ENCODE measurements at regions of chr6 and their contacts with region 1.

Region 1: DNA sequence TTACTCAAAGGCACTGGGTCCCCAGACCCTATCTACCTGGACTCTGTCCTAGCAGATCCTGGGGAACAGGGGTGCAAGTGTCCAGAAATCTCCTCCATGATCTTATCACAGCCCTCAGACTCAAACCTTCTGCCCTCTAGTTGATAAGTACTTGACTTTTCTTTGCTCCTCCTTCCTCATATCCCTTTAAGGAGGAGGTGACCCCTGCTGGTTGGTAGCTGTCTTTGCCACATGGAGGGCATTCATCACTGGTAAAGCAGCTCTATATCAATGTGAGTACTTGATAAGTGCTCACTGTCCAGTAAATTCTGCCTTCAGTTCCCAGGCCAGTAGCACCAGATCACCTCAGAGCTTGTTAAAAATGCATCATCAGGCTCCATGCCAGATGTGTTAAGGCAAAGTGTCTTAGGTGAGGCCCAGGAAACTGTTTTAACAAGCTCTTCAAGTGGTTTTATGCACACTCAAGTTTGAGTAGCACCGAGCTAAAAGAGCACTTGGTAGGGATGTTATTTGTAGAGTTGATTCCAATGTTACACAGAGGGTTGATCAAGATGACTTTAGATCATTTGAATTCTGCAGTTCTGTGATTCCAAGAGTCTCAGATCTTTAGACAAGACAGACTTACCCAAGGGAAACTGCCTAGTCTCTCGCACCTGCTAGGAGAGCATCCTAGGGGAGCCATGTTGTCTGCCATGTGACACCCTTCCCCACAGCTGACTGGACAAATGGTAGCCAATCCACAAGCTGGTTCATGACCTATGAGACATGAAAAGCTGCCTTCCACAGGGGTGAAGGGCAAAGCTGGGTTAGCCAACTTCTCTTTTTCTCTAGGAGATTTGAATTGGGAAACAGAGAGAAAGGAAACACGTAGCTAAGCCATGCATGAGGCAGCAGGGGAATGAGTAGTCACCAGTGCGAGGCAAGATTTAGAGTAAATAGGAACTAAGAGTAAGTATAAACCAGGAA is 18.6 kb downstream of the TREML2 start:
- DNase-seq: no peak
- ATAC-seq: peak; percentile 99
- H3K4me3 ChIP-seq: no peak overlapping the region
- H3K27ac ChIP-seq: no peak overlapping the region
- H3K4me1 ChIP-seq: no peaks in the 10 kb centered on the region
- H3K27me3 ChIP-seq: no peaks in the 10 kb centered on the region
- CTCF ChIP-seq: peak; percentile 73 to 77 (median 76)
- EP300 ChIP-seq: no peak
- POLR2A ChIP-seq: no peak
- RAD21 ChIP-seq: peak; percentile 66

Region 2: DNA sequence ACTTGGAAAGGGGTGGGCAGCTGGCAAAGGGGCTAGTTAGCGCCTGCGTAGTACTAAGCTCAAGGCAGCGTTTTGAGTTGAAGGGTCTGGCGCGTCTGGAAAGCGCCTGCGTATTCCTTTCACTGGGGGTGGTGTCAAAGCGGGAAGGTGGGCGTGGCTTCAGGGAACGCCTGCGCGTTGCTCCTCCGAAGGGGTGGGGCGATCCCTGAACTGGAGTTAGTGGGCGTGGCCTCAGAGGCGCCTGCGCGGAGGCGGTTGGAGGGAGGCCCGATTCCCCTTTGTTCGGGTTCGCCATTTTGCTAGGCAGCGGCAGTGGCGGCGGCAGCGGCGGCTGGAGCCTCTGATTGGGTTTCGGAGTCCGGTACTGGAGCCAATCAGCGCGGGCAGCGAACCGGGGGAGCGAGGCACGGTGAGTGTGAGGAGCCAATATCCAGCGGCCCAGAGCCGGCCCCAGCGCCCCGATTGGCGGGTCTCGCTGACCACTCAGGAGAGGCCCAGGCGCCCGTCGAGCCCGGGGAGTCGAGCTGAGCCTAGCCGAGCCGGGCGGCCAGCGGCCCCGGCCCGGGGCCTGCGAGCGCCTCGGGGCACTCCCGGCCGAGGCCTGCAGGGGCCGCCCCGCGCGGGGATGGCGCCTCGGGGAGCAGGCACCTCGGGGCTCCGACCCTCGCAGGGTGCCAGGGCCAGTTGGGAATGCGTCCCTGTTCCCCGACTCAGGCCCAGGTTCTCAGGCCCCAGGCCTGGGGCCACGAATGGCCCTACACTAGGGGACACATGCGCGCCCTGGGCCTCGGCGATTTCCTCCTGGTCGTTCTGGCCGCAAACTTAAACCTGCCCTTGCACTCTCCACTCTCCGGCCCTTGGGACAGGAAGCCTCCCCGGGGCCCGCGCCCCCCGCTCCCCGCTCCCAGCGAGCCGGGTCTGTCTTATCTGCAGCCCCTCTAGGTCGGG is 109.4 kb before region 1 on chr6 and contains the start of gene NFYA:
- CTCF ChIA-PET with region 1: interaction called, 14 read pairs
- POLR2A ChIA-PET with region 1: interaction called, 3 read pairs
- RAD21 ChIA-PET with region 1: interaction called, 14 read pairs
- SMC1A ChIA-PET with region 1: interaction called, 8 read pairs
- in situ Hi-C with region 1: no loop called
- intact Hi-C with region 1: no loop called
- DNase-seq: no peak
- ATAC-seq: peak; percentile 85
- H3K4me3 ChIP-seq: peak within 1 kb of the TSS; percentile 88
- H3K27ac ChIP-seq: peak within 1 kb of the TSS; percentile 99
- H3K4me1 ChIP-seq: peaks cover 7% of the 10 kb centered on the region; the same call in 1 of the 2 replicates
- H3K27me3 ChIP-seq: no peaks in the 10 kb centered on the region
- CTCF ChIP-seq: peak in 2 of 3 experiments; percentile 32 to 34; a peak in 4 of 6 replicates
- EP300 ChIP-seq: no peak
- POLR2A ChIP-seq: peak; percentile 33
- RAD21 ChIP-seq: no peak
- polyA plus RNA-seq, gene NFYA: 6.4 to 7.3 TPM

Region 3: GRCh38 chr6:41092421-41093140 is 89.8 kb before region 1 on chr6:
- CTCF ChIA-PET with region 1: interaction called, 49 read pairs
- POLR2A ChIA-PET with region 1: no interaction called
- RAD21 ChIA-PET with region 1: interaction called, 11 read pairs
- SMC1A ChIA-PET with region 1: interaction called, 17 read pairs
- in situ Hi-C with region 1: no loop called
- intact Hi-C with region 1: loop called (anchors 1 kb)
- DNase-seq: no peak
- ATAC-seq: peak; percentile 58
- H3K4me3 ChIP-seq: no peak overlapping the region
- H3K27ac ChIP-seq: no peak overlapping the region
- H3K4me1 ChIP-seq: no peaks in the 10 kb centered on the region
- H3K27me3 ChIP-seq: no peaks in the 10 kb centered on the region
- CTCF ChIP-seq: peak; percentile 31 to 45 (median 41); a peak in 4 of 6 replicates
- EP300 ChIP-seq: no peak
- POLR2A ChIP-seq: no peak
- RAD21 ChIP-seq: peak; percentile 62

Region 4: DNA sequence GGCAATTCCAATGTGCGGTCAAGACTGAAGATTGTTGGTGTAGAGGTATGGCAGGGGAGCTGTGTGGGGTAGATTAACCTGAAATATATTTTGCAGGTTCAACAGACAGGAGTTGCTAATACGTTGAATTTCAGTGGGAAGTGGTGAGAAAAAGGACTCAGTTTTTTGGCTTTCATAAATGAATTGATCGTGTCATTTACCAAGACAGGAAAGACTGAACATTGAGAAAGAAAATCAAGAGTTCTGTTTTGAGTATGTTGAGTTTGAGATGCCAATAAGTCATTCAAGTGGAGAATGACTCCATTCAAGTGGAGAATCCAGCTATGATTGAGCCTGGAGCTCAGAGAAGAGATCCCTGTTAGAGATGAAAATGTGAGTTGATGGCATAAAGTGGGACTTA is 78.5 kb before region 1 on chr6:
- CTCF ChIA-PET with region 1: interaction called, 13 read pairs
- POLR2A ChIA-PET with region 1: no interaction called
- RAD21 ChIA-PET with region 1: no interaction called
- SMC1A ChIA-PET with region 1: interaction called, 5 read pairs
- in situ Hi-C with region 1: no loop called
- intact Hi-C with region 1: no loop called
- DNase-seq: no peak
- ATAC-seq: no peak
- H3K4me3 ChIP-seq: no peak overlapping the region
- H3K27ac ChIP-seq: no peak overlapping the region
- H3K4me1 ChIP-seq: no peaks in the 10 kb centered on the region
- H3K27me3 ChIP-seq: no peaks in the 10 kb centered on the region
- CTCF ChIP-seq: no peak
- EP300 ChIP-seq: no peak
- POLR2A ChIP-seq: no peak
- RAD21 ChIP-seq: no peak

Region 5: DNA sequence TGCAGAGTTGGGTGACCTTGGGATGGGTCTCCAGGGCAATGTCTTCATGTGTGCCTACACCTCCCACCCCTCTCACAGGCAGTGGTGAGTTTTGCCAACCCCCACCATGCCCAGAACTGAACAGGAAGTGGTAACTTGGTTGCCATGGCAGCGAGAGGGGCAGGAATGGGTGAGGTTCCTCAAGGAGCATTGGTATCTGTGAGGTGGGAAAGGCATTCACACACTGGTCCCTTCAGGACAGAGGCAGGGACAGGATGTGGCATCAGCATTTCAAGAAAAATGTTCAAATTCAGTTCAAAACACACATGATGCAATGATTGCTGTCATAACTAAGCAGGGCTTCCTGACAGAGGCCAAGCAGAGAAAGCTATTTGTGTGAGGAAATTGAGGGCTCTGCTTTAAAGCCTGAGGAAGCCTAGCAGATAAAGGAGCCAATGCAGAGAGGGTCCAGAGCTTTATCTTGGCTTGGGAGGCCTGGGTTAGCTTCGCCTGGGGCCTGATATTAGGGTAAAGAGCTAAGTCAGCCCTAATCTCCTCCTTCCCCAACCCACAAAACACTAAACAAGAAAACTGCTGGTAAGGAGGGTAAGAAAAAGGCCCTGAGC is 18.0 kb after region 1 on chr6:
- CTCF ChIA-PET with region 1: interaction called, 26 read pairs
- POLR2A ChIA-PET with region 1: interaction called, 4 read pairs
- RAD21 ChIA-PET with region 1: interaction called, 5 read pairs
- SMC1A ChIA-PET with region 1: interaction called, 6 read pairs
- in situ Hi-C with region 1: no loop called
- intact Hi-C with region 1: no loop called
- DNase-seq: peak; percentile 58
- ATAC-seq: peak; percentile 56
- H3K4me3 ChIP-seq: peak overlapping the region; percentile 37
- H3K27ac ChIP-seq: peak overlapping the region; percentile 94
- H3K4me1 ChIP-seq: peaks cover 32% of the 10 kb centered on the region
- H3K27me3 ChIP-seq: no peaks in the 10 kb centered on the region
- CTCF ChIP-seq: no peak
- EP300 ChIP-seq: no peak
- POLR2A ChIP-seq: no peak
- RAD21 ChIP-seq: no peak

Region 6: GRCh38 chr6:41263267-41263666 is 80.9 kb after region 1 on chr6:
- CTCF ChIA-PET with region 1: no interaction called
- POLR2A ChIA-PET with region 1: no interaction called
- RAD21 ChIA-PET with region 1: no interaction called
- SMC1A ChIA-PET with region 1: no interaction called
- in situ Hi-C with region 1: no loop called
- intact Hi-C with region 1: no loop called
- DNase-seq: no peak
- ATAC-seq: no peak
- H3K4me3 ChIP-seq: no peak overlapping the region
- H3K27ac ChIP-seq: no peak overlapping the region
- H3K4me1 ChIP-seq: no peaks in the 10 kb centered on the region
- H3K27me3 ChIP-seq: no peaks in the 10 kb centered on the region
- CTCF ChIP-seq: no peak
- EP300 ChIP-seq: no peak
- POLR2A ChIP-seq: no peak
- RAD21 ChIP-seq: no peak

Region 7: DNA sequence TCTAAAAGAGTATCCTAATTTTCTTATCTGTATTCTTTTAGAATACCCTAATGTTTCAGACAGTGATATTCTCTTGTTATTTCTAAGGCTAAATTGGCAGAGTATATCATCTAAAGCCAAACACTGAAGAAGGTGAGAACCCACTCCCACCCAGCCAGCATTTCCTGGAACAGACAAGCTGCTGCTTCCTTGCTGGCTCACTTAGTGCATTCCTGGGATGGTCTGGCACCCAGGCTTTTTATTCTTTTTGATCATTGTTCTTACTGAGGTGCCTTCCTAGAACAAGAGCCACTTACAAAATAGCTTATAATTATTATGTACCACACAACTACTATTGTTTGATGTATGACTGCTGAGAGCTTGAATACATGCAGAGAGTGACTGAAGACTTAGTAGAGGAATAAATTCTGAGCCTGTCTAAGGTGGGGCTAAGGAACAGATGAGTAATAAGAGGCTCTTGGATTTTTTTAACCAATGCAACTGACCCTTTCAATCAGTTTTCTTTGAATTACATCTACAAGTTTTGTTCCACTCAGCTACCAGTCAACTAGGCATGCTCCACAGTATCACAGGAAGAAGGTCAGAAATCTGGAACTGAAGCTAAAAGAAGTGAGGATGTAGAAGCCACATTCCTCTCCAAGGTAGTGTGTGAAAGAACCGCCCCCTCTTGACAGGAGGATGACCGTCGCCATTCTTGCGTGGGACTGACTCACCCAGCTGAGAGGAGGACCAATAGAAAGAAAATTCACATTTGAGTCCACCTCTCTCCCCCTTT is 1510.0 kb after region 1 on chr6:
- CTCF ChIA-PET with region 1: no interaction called
- POLR2A ChIA-PET with region 1: no interaction called
- RAD21 ChIA-PET with region 1: no interaction called
- SMC1A ChIA-PET with region 1: no interaction called
- in situ Hi-C with region 1: no loop called
- intact Hi-C with region 1: no loop called
- DNase-seq: no peak
- ATAC-seq: no peak
- H3K4me3 ChIP-seq: no peak overlapping the region
- H3K27ac ChIP-seq: no peak overlapping the region
- H3K4me1 ChIP-seq: no peaks in the 10 kb centered on the region
- H3K27me3 ChIP-seq: no peaks in the 10 kb centered on the region
- CTCF ChIP-seq: no peak
- EP300 ChIP-seq: no peak
- POLR2A ChIP-seq: no peak
- RAD21 ChIP-seq: no peak

Measured in GM12878 (cell line).